Vagina (tissue), 2 donors: ENCODE measurements at regions of chr14 and their contacts with region 1.

Region 1: DNA sequence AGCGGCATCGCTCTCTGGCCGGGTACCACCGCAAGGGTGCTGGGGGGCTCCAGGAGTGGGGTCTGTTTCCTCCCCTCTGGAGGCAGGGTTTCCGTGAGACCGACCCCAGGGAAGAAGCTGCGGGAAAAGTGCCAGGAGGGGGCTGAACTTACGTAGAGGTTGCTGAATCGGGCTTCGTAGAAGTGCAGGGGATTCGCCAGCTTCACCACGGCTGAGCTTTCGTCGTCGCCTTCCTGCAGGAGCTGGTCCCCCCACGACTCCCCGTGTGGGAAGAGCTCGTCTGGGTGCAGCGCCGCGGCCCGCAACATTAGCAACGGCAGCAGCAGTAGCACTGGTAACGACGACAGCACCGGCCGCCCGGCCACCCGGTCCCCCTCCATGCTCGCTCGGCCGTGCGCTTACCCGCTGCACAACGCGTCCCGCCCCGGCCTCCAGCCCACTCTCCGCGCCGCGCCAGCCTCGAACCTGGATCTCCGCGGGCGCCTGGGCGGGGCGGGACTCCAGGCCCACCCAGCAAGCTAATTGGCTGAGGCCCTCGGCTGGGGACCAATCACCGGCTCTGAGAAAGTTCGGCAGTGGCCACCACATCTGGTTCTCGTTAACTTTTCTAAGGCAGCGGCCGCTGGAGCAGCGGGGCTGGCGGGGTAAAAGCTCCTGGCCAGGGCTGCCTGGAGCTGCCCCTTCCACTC is at the start of gene NID2:
- DNase-seq: no peak
- H3K4me3 ChIP-seq: peak within 1 kb of the TSS; percentile 65 to 66
- H3K27ac ChIP-seq: peak within 1 kb of the TSS; percentile 86
- H3K4me1 ChIP-seq: peaks cover 22% of the 10 kb centered on the region
- H3K27me3 ChIP-seq: no peaks in the 10 kb centered on the region
- CTCF ChIP-seq: no peak
- POLR2A ChIP-seq: peak in 1 of 2 donors; percentile 41
- total RNA-seq, gene NID2: 20.1 TPM

Region 2: DNA sequence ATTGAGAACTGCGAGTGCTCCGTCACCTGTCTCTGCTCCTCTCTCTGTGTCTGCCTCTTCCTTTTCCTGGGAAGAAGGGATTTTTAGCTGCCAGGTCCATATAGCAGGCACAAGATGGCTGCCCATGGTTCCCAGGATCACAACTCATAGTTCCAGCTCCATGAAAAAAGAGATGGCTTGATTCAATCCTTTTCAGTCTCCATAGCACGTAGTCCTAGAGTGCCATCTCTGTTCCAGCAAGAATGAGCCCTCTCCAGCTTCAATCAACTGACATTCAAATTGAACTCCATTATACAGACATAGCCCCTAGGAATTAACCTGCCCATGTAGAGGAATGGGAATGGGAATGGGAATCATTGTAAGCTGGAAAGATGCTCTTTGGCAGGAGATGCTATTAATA is 114.1 kb before region 1 on chr14:
- intact Hi-C with region 1: no loop called
- DNase-seq: no peak
- H3K4me3 ChIP-seq: no peak overlapping the region
- H3K27ac ChIP-seq: no peak overlapping the region
- H3K4me1 ChIP-seq: no peaks in the 10 kb centered on the region
- H3K27me3 ChIP-seq: no peaks in the 10 kb centered on the region
- CTCF ChIP-seq: no peak
- POLR2A ChIP-seq: no peak

Region 3: GRCh38 chr14:51996148-51996746 is 72.5 kb before region 1 on chr14:
- intact Hi-C with region 1: loop called (anchors 5 kb)
- DNase-seq: no peak
- H3K4me3 ChIP-seq: no peak overlapping the region
- H3K27ac ChIP-seq: no peak overlapping the region
- H3K4me1 ChIP-seq: no peaks in the 10 kb centered on the region
- H3K27me3 ChIP-seq: no peaks in the 10 kb centered on the region
- CTCF ChIP-seq: peak in 2 of 3 experiments; percentile 38 to 73
- POLR2A ChIP-seq: no peak

Region 4: DNA sequence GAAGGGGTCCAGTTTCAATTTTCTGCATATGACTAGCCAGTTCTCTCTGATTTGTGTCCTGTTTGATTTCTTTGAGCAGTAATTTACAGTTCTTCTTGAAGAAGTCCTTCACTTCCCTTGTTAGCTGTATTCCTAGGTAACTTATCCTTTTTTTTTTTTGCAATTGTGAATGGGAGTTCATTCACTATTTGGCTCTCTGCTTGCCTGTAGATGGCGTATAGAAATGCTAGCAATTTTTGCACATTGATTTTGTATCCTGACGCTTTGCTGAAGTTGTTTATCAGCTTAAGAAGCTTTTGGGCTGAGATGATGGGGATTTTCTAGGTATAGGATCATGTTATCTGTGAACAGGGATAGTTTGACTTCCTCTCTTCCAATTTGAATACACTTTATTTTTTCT is 77.7 kb after region 1 on chr14:
- intact Hi-C with region 1: no loop called
- DNase-seq: no peak
- H3K4me3 ChIP-seq: no peak overlapping the region
- H3K27ac ChIP-seq: no peak overlapping the region
- H3K4me1 ChIP-seq: no peaks in the 10 kb centered on the region
- H3K27me3 ChIP-seq: no peaks in the 10 kb centered on the region
- CTCF ChIP-seq: no peak
- POLR2A ChIP-seq: no peak

Region 5: DNA sequence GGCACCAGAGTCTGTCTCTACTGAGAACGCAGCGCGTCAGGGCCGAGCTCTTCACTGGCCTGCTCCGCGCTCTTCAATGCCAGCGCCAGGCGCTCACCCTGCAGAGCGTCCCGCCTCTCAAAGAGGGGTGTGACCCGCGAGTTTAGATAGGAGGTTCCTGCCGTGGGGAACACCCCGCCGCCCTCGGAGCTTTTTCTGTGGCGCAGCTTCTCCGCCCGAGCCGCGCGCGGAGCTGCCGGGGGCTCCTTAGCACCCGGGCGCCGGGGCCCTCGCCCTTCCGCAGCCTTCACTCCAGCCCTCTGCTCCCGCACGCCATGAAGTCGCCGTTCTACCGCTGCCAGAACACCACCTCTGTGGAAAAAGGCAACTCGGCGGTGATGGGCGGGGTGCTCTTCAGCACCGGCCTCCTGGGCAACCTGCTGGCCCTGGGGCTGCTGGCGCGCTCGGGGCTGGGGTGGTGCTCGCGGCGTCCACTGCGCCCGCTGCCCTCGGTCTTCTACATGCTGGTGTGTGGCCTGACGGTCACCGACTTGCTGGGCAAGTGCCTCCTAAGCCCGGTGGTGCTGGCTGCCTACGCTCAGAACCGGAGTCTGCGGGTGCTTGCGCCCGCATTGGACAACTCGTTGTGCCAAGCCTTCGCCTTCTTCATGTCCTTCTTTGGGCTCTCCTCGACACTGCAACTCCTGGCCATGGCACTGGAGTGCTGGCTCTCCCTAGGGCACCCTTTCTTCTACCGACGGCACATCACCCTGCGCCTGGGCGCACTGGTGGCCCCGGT is 198.9 kb after region 1 on chr14 and contains the start of gene PTGDR:
- intact Hi-C with region 1: loop called (anchors 5 kb)
- DNase-seq: no peak
- H3K4me3 ChIP-seq: peak within 1 kb of the TSS; percentile 47 to 52
- H3K27ac ChIP-seq: peak within 1 kb of the TSS; percentile 37
- H3K4me1 ChIP-seq: peaks cover 37% of the 10 kb centered on the region
- H3K27me3 ChIP-seq: no peaks in the 10 kb centered on the region
- CTCF ChIP-seq: no peak
- POLR2A ChIP-seq: no peak
- total RNA-seq, gene PTGDR: 1.2 TPM